K562 (cell line): ENCODE measurements at regions of chr14 and their contacts with region 1.

Region 1: GRCh38 chr14:65164068-65164824 is 61.9 kb upstream of the MAX start:
- DNase-seq: peak; percentile 35 to 64 (median 36)
- ATAC-seq: peak; percentile 75
- H3K4me3 ChIP-seq: no peak overlapping the region
- H3K27ac ChIP-seq: no peak overlapping the region
- H3K4me1 ChIP-seq: no peaks in the 10 kb centered on the region
- H3K27me3 ChIP-seq: no peaks in the 10 kb centered on the region
- CTCF ChIP-seq: peak; percentile 47 to 76 (median 52); a peak in 5 of 6 replicates
- EP300 ChIP-seq: no peak
- POLR2A ChIP-seq: no peak
- RAD21 ChIP-seq: peak; percentile 87 to 90

Region 2: GRCh38 chr14:64410084-64410774 is 754.0 kb before region 1 on chr14:
- CTCF ChIA-PET with region 1: no interaction called
- POLR2A ChIA-PET with region 1: no interaction called
- in situ Hi-C with region 1: no loop called
- intact Hi-C with region 1: no loop called
- DNase-seq: no peak
- ATAC-seq: no peak
- H3K4me3 ChIP-seq: no peak overlapping the region
- H3K27ac ChIP-seq: no peak overlapping the region
- H3K4me1 ChIP-seq: no peaks in the 10 kb centered on the region; a peak in 1 of 5 replicates
- H3K27me3 ChIP-seq: no peaks in the 10 kb centered on the region
- CTCF ChIP-seq: no peak
- EP300 ChIP-seq: no peak
- POLR2A ChIP-seq: no peak
- RAD21 ChIP-seq: no peak

Region 3: GRCh38 chr14:65222440-65222858 is 58.2 kb after region 1 on chr14:
- CTCF ChIA-PET with region 1: no interaction called
- POLR2A ChIA-PET with region 1: interaction called, 4 read pairs
- in situ Hi-C with region 1: no loop called
- intact Hi-C with region 1: loop called (anchors 5 kb)
- DNase-seq: peak; percentile 52 to 65 (median 57)
- ATAC-seq: peak; percentile 93
- H3K4me3 ChIP-seq: no peak overlapping the region
- H3K27ac ChIP-seq: no peak overlapping the region
- H3K4me1 ChIP-seq: no peaks in the 10 kb centered on the region
- H3K27me3 ChIP-seq: no peaks in the 10 kb centered on the region
- CTCF ChIP-seq: peak; percentile 72 to 80 (median 80)
- EP300 ChIP-seq: no peak
- POLR2A ChIP-seq: no peak
- RAD21 ChIP-seq: peak; percentile 74 to 86

Region 4: GRCh38 chr14:65824285-65824977 is 660.2 kb after region 1 on chr14:
- CTCF ChIA-PET with region 1: no interaction called
- POLR2A ChIA-PET with region 1: no interaction called
- in situ Hi-C with region 1: loop called (anchors 25 kb)
- intact Hi-C with region 1: loop called (anchors 10 kb)
- DNase-seq: peak; percentile 54 to 66 (median 62)
- ATAC-seq: peak; percentile 87
- H3K4me3 ChIP-seq: no peak overlapping the region
- H3K27ac ChIP-seq: no peak overlapping the region
- H3K4me1 ChIP-seq: no peaks in the 10 kb centered on the region
- H3K27me3 ChIP-seq: peaks cover 9 to 27% of the 10 kb centered on the region in 2 experiments; a peak in 4 of 5 replicates
- CTCF ChIP-seq: peak; percentile 60 to 74 (median 65)
- EP300 ChIP-seq: no peak
- POLR2A ChIP-seq: no peak
- RAD21 ChIP-seq: peak; percentile 67 to 69

Region 5: DNA sequence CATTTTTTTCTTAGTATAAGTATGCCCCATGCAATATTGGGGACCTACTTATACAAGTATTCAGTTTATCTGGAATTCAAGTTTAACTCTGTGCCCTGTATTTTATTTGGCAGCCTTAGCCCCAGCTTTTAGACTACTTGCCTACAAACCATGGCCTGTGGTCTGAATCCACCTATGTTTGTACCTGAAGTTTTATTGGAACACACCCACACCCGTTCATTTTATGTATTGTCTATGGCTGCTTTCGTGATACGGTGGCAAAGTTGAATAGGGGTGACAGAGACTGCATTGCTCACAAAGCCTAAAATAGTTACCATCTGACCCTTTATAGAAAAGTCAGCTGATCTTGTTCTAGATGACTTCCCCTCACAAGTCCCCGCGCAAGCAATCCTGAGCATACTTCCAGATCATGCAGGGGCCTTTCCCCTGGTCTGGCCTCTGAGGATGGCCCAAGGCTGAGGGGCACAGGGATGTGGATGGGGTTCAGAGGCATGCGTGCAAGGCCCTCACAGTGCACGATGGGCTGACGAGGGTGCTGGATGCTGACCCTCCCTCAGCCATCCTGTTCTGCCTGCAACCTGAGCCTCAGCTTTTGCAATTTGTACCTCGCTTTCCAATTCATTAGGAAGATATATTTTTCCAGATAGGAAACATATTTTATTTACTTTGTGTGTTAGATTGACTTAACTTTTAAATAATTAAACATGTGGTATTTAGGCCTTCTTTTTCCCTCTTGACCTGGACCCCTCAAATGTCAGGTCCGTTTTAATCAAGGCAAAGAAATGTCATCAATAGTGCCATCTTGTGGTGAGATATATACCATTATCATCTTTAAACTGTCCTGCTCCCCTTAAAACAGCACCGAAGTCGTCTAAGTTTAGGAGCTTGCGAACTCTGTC is 794.7 kb after region 1 on chr14:
- CTCF ChIA-PET with region 1: interaction called, 9 read pairs
- POLR2A ChIA-PET with region 1: no interaction called
- in situ Hi-C with region 1: loop called (anchors 10 kb)
- intact Hi-C with region 1: loop called (anchors 10 kb)
- DNase-seq: peak; percentile 24 to 30 (median 26)
- ATAC-seq: peak; percentile 76
- H3K4me3 ChIP-seq: no peak overlapping the region
- H3K27ac ChIP-seq: no peak overlapping the region
- H3K4me1 ChIP-seq: no peaks in the 10 kb centered on the region
- H3K27me3 ChIP-seq: no peaks in the 10 kb centered on the region; a peak in 1 of 5 replicates
- CTCF ChIP-seq: peak in 1 of 3 experiments; percentile 50; a peak in 3 of 6 replicates
- EP300 ChIP-seq: no peak
- POLR2A ChIP-seq: no peak
- RAD21 ChIP-seq: peak; percentile 50 to 63